Activated naive CD4-positive, alpha-beta T cell treated with anti-CD3 and anti-CD28 coated beads for 36 hours (primary cell): ENCODE measurements at regions of chr3 and their contacts with region 1.

Region 1: DNA sequence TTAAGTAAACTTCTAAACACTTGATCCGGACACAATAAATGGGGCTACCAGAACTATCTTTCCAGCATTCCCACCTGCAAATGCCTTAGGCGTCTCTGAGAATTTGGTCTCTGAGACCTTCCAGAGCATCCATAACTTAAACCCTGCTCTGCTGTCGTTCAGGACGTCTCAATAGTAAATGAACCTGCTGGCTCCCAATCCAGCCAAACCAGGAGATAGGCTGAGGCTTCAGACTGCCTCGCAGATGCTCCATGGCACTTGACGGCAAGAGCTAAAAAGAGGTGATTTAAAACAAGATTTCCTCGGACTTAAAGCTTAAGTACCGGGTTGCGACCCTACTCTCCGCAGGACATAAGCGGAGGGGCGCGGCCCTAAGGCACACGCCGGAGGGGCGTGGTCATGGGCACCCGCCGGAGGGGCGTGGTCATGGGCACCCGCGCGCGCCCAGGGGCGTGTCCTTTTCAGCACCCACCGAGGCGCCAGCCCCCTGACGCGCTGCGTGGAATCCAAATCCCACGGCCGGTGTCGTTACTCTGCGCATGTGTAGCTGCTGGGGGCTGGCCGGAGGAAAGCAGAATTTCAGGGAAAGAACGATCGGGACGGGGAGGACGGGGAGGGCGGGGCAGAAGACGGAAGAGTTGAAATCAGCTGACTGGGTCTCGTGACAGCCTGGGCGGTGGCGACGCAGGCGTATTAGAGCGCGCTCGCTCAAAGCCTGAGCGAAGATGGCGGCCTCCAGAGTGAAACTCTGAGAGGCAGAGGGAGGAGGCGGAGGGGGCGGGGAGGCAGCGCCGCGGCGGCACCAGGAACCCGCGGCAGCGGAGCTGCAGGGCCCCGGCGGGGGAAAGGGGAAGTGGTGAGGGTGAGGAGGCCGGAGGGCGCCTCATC is at the start of gene DNAJC13:
- DNase-seq: peak; percentile 92
- H3K4me3 Mint-ChIP-seq: peak within 1 kb of the TSS; percentile 91
- H3K27ac Mint-ChIP-seq: peak within 1 kb of the TSS; percentile 90
- H3K4me1 Mint-ChIP-seq: peaks cover 22% of the 10 kb centered on the region
- H3K27me3 Mint-ChIP-seq: no peaks in the 10 kb centered on the region
- total RNA-seq, gene DNAJC13: 32.8 to 33.6 TPM

Region 2: DNA sequence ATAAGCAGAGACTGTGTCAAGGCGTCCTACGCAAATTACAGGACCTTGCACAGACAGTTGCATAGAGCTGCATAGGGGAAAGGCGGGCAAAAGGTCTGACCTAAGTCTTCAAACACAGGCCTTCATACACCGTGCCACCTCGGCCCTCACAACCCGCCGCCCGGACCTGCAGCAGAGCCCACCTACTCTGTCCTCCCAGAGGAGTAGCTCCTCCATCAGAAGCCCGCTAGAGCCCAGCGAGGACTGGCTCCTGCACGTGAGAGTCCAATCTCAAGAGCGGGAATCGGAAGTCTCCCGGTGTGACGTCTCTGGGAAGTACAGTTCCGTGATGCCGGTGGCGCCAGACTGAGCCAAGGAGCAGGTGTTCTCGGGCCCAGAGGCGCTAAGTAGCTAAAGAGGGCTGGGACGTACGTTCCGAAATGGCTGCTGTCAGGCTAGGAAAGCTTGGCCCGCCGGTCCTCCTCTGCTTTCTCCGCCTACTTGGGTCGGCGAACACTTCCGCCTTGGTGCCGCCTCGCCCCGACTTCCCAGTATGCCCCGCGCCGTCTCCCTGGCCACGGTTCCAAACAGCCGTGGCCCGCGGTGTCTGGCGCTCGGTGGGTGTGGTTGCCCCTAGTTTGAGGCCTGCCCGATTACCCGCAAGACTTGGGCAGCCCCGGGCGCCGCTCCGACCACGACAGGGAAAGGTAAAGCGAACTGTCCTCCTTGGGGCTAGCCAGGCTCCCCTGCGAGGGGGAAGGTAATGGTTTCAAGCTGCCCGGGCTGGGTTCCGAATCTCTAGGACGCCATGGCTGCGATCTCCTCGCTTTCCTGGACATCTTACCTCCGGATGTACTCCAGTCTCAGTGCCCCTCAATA is 1390.5 kb before region 1 on chr3 and contains the starts of genes ASTE1 and NEK11:
- CTCF ChIA-PET with region 1: no interaction called
- intact Hi-C with region 1: loop called (anchors 2 kb)
- DNase-seq: peak; percentile 92
- H3K4me3 Mint-ChIP-seq: peak within 1 kb of the TSS; percentile 92
- H3K27ac Mint-ChIP-seq: peak within 1 kb of the TSS; percentile 94
- H3K4me1 Mint-ChIP-seq: peaks cover 42% of the 10 kb centered on the region
- H3K27me3 Mint-ChIP-seq: no peaks in the 10 kb centered on the region
- total RNA-seq, gene ASTE1: 10.8 to 11.2 TPM
- total RNA-seq, gene NEK11: 1.1 to 1.9 TPM

Region 3: GRCh38 chr3:131502530-131503245 is 914.4 kb before region 1 on chr3 and contains the start of gene MRPL3:
- CTCF ChIA-PET with region 1: no interaction called
- intact Hi-C with region 1: loop called (anchors 1 kb)
- DNase-seq: peak; percentile 90
- H3K4me3 Mint-ChIP-seq: peak within 1 kb of the TSS; percentile 91
- H3K27ac Mint-ChIP-seq: peak within 1 kb of the TSS; percentile 88
- H3K4me1 Mint-ChIP-seq: peaks cover 37% of the 10 kb centered on the region
- H3K27me3 Mint-ChIP-seq: no peaks in the 10 kb centered on the region
- total RNA-seq, gene MRPL3: 151 to 161 TPM

Region 4: GRCh38 chr3:132432639-132433038 is 15.6 kb after region 1 on chr3:
- CTCF ChIA-PET with region 1: interaction called, 3 read pairs
- intact Hi-C with region 1: loop called (anchors 1 kb)
- DNase-seq: peak; percentile 26
- H3K4me3 Mint-ChIP-seq: no peak overlapping the region
- H3K27ac Mint-ChIP-seq: no peak overlapping the region
- H3K4me1 Mint-ChIP-seq: peaks cover 25% of the 10 kb centered on the region
- H3K27me3 Mint-ChIP-seq: no peaks in the 10 kb centered on the region

Region 5: GRCh38 chr3:132641837-132642538 is 224.9 kb after region 1 on chr3:
- CTCF ChIA-PET with region 1: no interaction called
- intact Hi-C with region 1: loop called (anchors 5 kb)
- DNase-seq: no peak
- H3K4me3 Mint-ChIP-seq: no peak overlapping the region
- H3K27ac Mint-ChIP-seq: no peak overlapping the region
- H3K4me1 Mint-ChIP-seq: peaks cover 3% of the 10 kb centered on the region
- H3K27me3 Mint-ChIP-seq: no peaks in the 10 kb centered on the region

Region 6: DNA sequence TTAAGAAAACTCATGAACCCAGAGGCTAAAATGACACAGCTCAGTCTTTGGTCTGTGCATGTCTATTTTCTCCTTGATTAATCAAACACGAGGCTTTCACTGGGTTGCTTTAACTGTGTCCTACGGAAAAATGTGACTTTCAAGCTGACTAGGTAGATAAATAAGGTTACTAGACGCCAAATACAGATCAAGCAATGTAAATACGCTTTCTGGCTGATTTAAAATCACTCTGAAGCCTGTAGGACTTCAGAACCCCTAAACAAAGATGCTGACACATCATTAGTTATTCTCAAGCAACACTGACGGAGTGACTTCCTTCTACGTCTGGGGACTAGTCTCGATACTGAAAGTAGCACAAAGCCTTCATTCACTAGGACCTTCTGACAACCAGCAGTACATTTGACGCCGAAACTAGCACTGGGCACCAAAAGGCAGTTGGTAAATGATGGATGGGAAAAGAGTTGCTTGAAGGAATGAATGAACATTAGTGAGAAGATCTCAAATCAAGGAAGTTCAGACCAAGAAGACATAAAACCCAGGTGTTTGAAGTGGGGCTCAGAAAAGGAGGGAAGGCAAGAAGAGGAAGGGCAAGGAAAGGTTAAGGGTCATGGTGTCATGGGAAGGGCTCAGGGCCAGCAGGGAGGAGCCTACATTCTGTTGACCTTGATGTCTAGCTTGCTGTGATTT is 1089.3 kb after region 1 on chr3:
- CTCF ChIA-PET with region 1: no interaction called
- intact Hi-C with region 1: loop called (anchors 5 kb)
- DNase-seq: peak; percentile 59
- H3K4me3 Mint-ChIP-seq: peak overlapping the region; percentile 54
- H3K27ac Mint-ChIP-seq: peak overlapping the region; percentile 67
- H3K4me1 Mint-ChIP-seq: peaks cover 11% of the 10 kb centered on the region
- H3K27me3 Mint-ChIP-seq: no peaks in the 10 kb centered on the region

Region 7: DNA sequence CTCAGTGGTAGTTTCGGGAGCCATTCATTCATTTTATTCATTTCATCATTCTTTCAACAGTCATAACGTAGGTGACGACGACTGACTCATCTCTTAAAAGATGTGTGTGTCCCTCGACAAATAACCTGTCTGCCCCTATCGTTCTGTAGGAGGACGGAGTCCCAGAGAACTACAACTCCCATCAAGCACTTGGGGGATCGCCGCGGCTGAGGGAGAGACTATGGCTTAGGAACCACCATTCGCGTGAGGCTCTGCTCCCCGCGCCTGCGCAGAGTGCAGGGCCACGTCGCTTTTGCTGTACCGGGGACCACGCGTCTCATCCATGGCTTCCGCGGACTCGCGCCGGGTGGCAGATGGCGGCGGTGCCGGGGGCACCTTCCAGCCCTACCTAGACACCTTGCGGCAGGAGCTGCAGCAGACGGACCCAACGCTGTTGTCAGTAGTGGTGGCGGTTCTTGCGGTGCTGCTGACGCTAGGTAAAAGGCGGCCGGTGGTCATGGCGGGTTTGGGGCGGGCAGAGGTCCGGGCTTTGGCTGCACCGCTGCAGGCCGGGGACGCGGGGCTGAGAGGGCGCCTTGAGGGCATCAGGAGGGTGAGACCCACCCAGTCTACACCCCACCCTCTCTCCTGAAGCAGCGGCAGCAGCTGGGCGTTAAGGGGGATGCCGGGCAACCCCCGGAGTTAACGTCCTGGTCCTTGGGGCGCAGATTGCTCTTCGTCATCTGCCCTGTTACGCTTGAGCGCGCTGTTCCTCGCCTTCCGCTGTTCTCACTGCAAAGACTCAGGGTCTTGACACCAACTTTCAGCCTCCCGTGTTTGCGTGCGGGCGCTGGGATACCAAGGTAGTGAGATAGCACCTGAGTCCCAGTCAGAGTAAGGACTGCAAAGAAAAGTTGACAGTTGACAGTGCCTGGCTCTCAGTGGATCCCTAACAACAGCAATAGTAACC is 1388.8 kb after region 1 on chr3 and contains the start of gene SRPRB:
- CTCF ChIA-PET with region 1: no interaction called
- intact Hi-C with region 1: loop called (anchors 2 kb)
- DNase-seq: peak; percentile 98
- H3K4me3 Mint-ChIP-seq: peak within 1 kb of the TSS; percentile 93
- H3K27ac Mint-ChIP-seq: peak within 1 kb of the TSS; percentile 94
- H3K4me1 Mint-ChIP-seq: peaks cover 37% of the 10 kb centered on the region
- H3K27me3 Mint-ChIP-seq: no peaks in the 10 kb centered on the region
- total RNA-seq, gene SRPRB: 55.0 to 56.8 TPM